ENCODE measurements at regions of chr17 and their contacts with region 1.

Region 1: GRCh38 chr17:76296186-76296585 is 11.9 kb downstream of the QRICH2 start:
- DNase-seq: no peak
- H3K4me3 ChIP-seq: no peak overlapping the region
- H3K27ac ChIP-seq: no peak overlapping the region
- H3K4me1 ChIP-seq: no peaks in the 10 kb centered on the region
- H3K27me3 ChIP-seq: no peaks in the 10 kb centered on the region
- CTCF ChIP-seq: no peak

Region 2: GRCh38 chr17:75894049-75894711 is 402.0 kb before region 1 on chr17:
- CTCF ChIA-PET with region 1: no interaction called
- POLR2A ChIA-PET with region 1: no interaction called
- intact Hi-C with region 1: no loop called
- DNase-seq: no peak
- H3K4me3 ChIP-seq: no peak overlapping the region
- H3K27ac ChIP-seq: no peak overlapping the region
- H3K4me1 ChIP-seq: 0 out of 2 replicates have a peak, but pooled peaks cover 4% of the 10 kb centered on the region
- H3K27me3 ChIP-seq: no peaks in the 10 kb centered on the region
- CTCF ChIP-seq: no peak

Region 3: GRCh38 chr17:76014184-76014924 is 281.8 kb before region 1 on chr17:
- CTCF ChIA-PET with region 1: no interaction called
- POLR2A ChIA-PET with region 1: no interaction called
- intact Hi-C with region 1: loop called (anchors 5 kb)
- DNase-seq: peak in 1 of 2 experiments; percentile 69
- H3K4me3 ChIP-seq: no peak overlapping the region
- H3K27ac ChIP-seq: no peak overlapping the region
- H3K4me1 ChIP-seq: no peaks in the 10 kb centered on the region
- H3K27me3 ChIP-seq: no peaks in the 10 kb centered on the region
- CTCF ChIP-seq: peak; percentile 94

Region 4: DNA sequence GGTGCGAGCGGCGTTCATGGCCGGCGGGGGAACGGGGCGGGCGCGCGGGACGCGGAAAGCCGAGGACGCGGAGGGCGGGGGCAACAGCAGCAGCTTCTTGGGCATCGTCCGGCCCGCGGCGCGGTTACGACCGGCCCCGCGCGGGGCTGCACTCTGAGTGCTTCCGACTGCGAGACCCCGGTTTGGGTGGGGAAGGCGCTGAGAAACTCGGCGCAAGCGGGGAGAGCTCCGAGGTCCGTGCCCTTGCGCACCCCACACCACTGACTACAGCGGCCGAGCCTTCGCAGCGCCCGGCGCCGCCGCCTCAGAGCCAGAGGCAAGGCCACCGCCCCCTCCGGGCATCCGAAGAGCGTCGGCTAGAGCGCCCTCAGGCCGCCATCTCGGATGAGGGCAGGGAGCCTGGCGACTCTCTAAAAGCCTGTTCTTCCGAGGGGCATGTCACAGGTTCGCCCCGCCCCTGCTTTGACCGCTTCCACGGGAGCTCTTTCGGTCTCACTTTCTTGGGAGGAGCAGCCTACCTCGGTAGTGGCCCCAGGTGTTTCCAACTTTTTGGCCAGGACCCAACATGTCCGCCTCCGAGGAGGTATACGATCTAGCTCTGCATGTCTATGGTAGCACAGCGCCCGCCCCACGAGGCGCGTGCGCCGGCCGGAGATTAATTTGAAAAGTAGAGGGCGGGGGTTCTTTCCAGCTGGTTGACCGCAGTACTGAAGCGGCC is 57.6 kb after region 1 on chr17 and contains the start of gene PRPSAP1:
- CTCF ChIA-PET with region 1: no interaction called
- POLR2A ChIA-PET with region 1: no interaction called
- intact Hi-C with region 1: no loop called
- DNase-seq: peak; percentile 79 to 88
- H3K4me3 ChIP-seq: peak within 1 kb of the TSS; percentile 73
- H3K27ac ChIP-seq: peak within 1 kb of the TSS; percentile 75
- H3K4me1 ChIP-seq: no peaks in the 10 kb centered on the region
- H3K27me3 ChIP-seq: no peaks in the 10 kb centered on the region
- CTCF ChIP-seq: peak; percentile 49; the same call in 1 of the 2 replicates
- total RNA-seq, gene PRPSAP1: 63.3 and 73.0 TPM in 2 replicates

Measured in PC-9 (cell line).